GM10248 (cell line): ENCODE measurements at regions of chr4 and their contacts with region 1.

Region 1: DNA sequence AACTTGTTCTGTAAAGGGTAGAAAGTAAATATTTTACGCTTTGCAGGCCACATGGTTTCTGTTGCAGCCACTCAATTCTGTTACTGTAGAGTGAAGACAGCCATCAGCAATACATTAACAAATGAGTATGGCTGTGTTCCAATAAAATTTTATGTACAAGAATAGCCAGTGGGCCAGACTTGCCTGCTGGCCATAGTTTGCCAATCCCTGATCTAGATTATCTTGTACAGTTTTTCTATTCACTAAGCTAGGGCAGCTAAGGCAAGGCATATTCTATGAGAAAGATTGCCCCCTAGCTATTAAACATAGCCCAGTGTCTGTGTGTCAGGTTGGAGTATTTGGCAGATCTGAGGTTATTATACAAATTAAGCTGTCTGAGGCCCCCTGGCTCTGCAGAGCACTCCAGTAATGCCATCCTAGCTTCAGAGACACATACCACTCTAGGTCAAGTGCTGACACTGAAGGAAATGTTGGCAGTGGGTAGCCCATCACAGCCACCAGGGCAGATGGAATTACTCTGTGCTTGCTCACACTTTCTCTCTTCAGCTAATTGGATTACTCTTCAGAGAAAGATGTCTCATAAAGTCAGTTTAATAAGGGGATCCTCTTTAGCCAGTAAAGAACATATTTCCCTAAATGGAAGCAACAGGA is 40.7 kb downstream of the MTTP start:
- DNase-seq: no peak
- CTCF ChIP-seq: no peak

Region 2: GRCh38 chr4:99563310-99564186 is 51.7 kb before region 1 on chr4 and contains the start of gene TRMT10A:
- CTCF ChIA-PET with region 1: interaction called, 12 read pairs
- POLR2A ChIA-PET with region 1: no interaction called
- DNase-seq: peak; percentile 91
- CTCF ChIP-seq: no peak

Region 3: GRCh38 chr4:99629962-99630554 is 14.8 kb after region 1 on chr4:
- CTCF ChIA-PET with region 1: interaction called, 14 read pairs
- POLR2A ChIA-PET with region 1: no interaction called
- DNase-seq: no peak
- CTCF ChIP-seq: no peak